ENCODE measurements at regions of chr1 and their contacts with region 1.

Region 1: GRCh38 chr1:119140177-119141019 is at the start of gene WARS2:
- DNase-seq: peak; percentile 88 to 98
- ATAC-seq: peak; percentile 81 to 95 (median 83)
- H3K4me3 ChIP-seq: peak within 1 kb of the TSS; percentile 47
- H3K4me3 Mint-ChIP-seq: no peak within 1 kb of the TSS
- H3K27ac ChIP-seq: peak within 1 kb of the TSS; percentile 95
- H3K27ac Mint-ChIP-seq: no peak within 1 kb of the TSS
- H3K4me1 ChIP-seq: peaks cover 11% of the 10 kb centered on the region
- H3K4me1 Mint-ChIP-seq: no peaks in the 10 kb centered on the region
- H3K27me3 ChIP-seq: no peaks in the 10 kb centered on the region
- H3K27me3 Mint-ChIP-seq: no peaks in the 10 kb centered on the region
- CTCF ChIP-seq: no peak
- total RNA-seq, gene WARS2: 24.3 to 46.3 (median 41.0) TPM

Region 2: GRCh38 chr1:117929173-117929989 is 1211.0 kb before region 1 on chr1 and contains the starts of genes GDAP2 and WDR3:
- intact Hi-C with region 1: loop called (anchors 10 kb)
- DNase-seq: peak; percentile 90 to 98
- ATAC-seq: peak; percentile 87 to 96 (median 89)
- H3K4me3 ChIP-seq: peak within 1 kb of the TSS; percentile 74
- H3K4me3 Mint-ChIP-seq: peak within 1 kb of the TSS; percentile 91
- H3K27ac ChIP-seq: peak within 1 kb of the TSS; percentile 80
- H3K27ac Mint-ChIP-seq: peak within 1 kb of the TSS; percentile 91 to 98
- H3K4me1 ChIP-seq: peaks cover 18% of the 10 kb centered on the region
- H3K4me1 Mint-ChIP-seq: peaks cover 42 to 58% of the 10 kb centered on the region in 2 donors
- H3K27me3 ChIP-seq: no peaks in the 10 kb centered on the region
- H3K27me3 Mint-ChIP-seq: no peaks in the 10 kb centered on the region
- CTCF ChIP-seq: no peak
- total RNA-seq, gene GDAP2: 25.4 to 34.7 (median 27.7) TPM
- total RNA-seq, gene WDR3: 7.2 to 13.0 (median 8.3) TPM

Region 3: GRCh38 chr1:118861216-118861615 is 279.2 kb before region 1 on chr1:
- intact Hi-C with region 1: no loop called
- DNase-seq: no peak
- ATAC-seq: no peak
- H3K4me3 ChIP-seq: no peak overlapping the region
- H3K4me3 Mint-ChIP-seq: no peak overlapping the region
- H3K27ac ChIP-seq: no peak overlapping the region
- H3K27ac Mint-ChIP-seq: no peak overlapping the region
- H3K4me1 ChIP-seq: no peaks in the 10 kb centered on the region
- H3K4me1 Mint-ChIP-seq: no peaks in the 10 kb centered on the region
- H3K27me3 ChIP-seq: no peaks in the 10 kb centered on the region
- H3K27me3 Mint-ChIP-seq: no peaks in the 10 kb centered on the region
- CTCF ChIP-seq: no peak

Region 4: GRCh38 chr1:119124764-119125163 is 15.6 kb before region 1 on chr1:
- intact Hi-C with region 1: loop called (anchors 1 kb)
- DNase-seq: no peak
- ATAC-seq: no peak
- H3K4me3 ChIP-seq: no peak overlapping the region
- H3K4me3 Mint-ChIP-seq: no peak overlapping the region
- H3K27ac ChIP-seq: no peak overlapping the region
- H3K27ac Mint-ChIP-seq: no peak overlapping the region
- H3K4me1 ChIP-seq: no peaks in the 10 kb centered on the region
- H3K4me1 Mint-ChIP-seq: peaks cover 11 to 15% of the 10 kb centered on the region in 2 donors
- H3K27me3 ChIP-seq: no peaks in the 10 kb centered on the region
- H3K27me3 Mint-ChIP-seq: no peaks in the 10 kb centered on the region
- CTCF ChIP-seq: no peak

Measured in natural killer cell (primary cell).